ENCODE measurements at regions of chr1 and their contacts with region 1.

Region 1: DNA sequence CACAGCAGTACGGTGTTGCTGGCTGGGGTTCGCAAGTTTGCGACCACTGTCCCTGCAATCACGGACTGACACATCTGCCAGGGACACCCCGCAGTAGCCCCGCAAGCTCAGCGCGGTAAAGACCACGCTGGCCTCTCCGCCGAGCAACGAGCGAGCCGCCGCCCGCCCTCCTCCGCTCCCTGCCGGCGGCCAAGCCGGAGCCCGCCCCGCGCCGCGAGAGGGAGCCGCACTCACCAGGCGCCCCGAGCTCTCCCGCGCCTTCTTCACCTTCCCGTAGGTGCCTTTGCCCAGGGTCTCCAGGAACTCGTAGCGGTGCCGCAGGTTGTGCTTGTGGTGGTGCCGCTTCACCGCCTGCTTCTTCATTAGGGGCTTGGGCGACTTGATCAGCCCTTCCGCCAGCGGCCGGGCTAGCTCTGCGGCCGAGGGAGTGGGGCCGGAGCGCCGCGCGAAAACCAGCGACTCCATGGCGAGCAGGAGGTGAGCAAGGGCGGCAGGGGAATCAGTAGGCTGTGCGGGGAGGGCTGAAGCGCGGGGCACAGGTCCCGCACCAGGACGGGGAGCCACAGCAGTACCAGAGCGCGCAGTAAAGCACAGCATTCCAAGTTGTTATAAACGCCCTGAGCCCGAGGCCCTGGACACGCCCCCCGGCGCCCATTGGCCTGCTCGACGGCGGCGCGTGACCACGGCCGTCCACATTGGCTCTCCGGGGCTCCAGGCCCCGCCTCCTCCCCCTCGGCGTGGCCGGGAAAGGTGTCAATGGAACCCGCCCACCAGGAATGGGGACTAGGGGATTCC is at the start of gene NUAK2:
- DNase-seq: peak; percentile 71 to 91
- H3K4me3 ChIP-seq: peak within 1 kb of the TSS; percentile 94
- H3K27ac ChIP-seq: no peak within 1 kb of the TSS
- H3K4me1 ChIP-seq: peaks cover 56% of the 10 kb centered on the region
- H3K27me3 ChIP-seq: 0 out of 2 replicates have a peak, but pooled peaks cover 2% of the 10 kb centered on the region
- CTCF ChIP-seq: peak; percentile 50; the same call in 1 of the 2 replicates
- total RNA-seq, gene NUAK2: 3.8 and 3.9 TPM in 2 replicates

Region 2: DNA sequence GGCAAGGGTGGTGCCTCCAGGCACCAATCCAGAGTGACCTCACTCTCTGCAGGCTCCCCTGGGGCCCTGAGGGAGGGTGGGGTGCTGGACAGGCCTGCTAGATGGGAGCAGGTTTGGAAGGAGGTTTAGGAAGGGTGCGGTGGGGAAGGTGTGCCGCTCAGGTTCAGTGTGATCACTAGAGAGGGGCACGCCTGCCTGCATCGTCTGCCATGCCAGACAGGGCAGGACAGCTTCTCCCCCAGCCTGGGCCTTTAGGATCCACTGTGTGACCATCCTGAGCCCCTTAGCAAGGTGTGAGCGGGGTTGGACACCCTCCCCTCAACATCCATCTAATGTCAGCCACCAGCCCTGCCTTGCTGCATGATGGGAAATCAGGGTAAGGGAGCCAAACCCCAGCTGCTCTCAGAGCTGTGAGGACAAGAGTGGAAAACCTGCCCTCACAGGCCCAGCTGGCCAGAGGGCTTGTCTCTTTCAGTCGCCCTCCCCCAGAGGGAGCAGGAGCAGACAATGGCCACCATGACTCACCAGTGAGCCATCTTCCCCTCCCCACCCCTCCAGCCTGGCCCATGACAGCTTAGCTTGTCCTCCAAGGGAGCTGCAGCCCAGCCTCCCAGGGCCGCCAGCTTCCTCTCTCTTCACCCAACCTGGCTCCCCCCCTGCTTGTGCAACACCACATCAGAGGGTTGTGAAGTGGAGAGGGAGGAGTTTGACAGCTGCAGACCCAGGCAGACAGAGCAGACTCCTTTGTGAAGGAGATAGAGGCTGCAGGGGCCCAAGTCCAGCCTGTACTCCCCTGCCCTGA is 36.8 kb before region 1 on chr1:
- CTCF ChIA-PET with region 1: interaction called, 13 read pairs
- POLR2A ChIA-PET with region 1: interaction called, 8 read pairs
- intact Hi-C with region 1: loop called (anchors 1 kb)
- DNase-seq: peak; percentile 94 to 96
- H3K4me3 ChIP-seq: no peak overlapping the region
- H3K27ac ChIP-seq: 0 out of 2 replicates have a peak overlapping the region, but pooled peaks have one; percentile 24
- H3K4me1 ChIP-seq: peaks cover 25% of the 10 kb centered on the region
- H3K27me3 ChIP-seq: no peaks in the 10 kb centered on the region
- CTCF ChIP-seq: no peak

Measured in PC-9 (cell line).